MCF 10A (cell line): ENCODE measurements at regions of chr1 and their contacts with region 1.

Region 1: DNA sequence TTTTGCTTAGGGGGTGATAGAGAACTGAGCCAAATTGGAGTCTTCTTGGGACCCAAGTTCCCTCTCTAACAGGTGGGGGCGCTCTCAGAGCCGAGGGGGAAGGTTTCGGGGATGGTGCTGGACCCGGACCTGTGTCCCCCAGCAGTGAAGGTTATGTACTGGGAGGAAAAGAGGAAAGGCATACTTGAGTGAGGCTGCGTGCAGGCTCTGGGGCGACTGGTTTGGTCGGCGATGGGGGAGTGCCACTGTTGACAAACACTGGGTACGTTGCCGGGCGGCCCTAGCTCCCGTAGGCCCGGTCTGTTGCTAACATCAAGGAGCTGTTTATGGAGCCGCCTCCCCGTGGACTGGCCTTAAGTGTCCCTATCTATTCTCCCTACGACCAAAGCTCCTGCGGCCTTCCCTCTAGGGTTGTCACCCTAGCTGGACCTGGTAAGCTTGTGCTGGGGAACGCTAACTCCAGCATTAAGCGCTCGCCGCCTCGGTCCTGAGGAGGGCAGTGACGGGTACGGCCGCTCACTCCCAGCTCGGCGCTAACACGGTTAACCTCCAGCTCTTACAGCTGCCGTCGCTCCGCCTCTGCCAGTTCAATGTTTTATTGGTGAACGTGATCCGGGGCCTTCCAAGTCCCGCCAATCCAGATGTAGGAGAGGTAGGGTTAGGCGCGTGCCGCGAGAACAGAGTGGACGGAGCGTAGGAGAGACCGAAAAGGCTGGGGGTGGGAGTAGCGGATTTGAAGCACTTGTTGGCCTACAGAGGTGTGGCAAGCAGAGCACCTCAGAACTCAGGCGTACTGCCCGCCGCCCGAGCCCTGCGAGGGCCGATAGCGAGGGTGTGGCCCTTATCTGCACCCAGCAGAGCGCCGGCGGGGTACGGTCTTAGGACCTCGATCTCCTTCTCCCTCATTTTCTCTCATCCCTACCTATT is at the start of gene PPOX:
- DNase-seq: peak; percentile 100
- H3K4me3 Mint-ChIP-seq: peak within 1 kb of the TSS; percentile 98
- H3K27ac Mint-ChIP-seq: peak within 1 kb of the TSS; percentile 100
- H3K4me1 Mint-ChIP-seq: peaks cover 47% of the 10 kb centered on the region
- H3K27me3 Mint-ChIP-seq: no peaks in the 10 kb centered on the region
- CTCF ChIP-seq: peak; percentile 36
- total RNA-seq, gene PPOX: 30.3 and 32.4 TPM in 2 replicates

Region 2: DNA sequence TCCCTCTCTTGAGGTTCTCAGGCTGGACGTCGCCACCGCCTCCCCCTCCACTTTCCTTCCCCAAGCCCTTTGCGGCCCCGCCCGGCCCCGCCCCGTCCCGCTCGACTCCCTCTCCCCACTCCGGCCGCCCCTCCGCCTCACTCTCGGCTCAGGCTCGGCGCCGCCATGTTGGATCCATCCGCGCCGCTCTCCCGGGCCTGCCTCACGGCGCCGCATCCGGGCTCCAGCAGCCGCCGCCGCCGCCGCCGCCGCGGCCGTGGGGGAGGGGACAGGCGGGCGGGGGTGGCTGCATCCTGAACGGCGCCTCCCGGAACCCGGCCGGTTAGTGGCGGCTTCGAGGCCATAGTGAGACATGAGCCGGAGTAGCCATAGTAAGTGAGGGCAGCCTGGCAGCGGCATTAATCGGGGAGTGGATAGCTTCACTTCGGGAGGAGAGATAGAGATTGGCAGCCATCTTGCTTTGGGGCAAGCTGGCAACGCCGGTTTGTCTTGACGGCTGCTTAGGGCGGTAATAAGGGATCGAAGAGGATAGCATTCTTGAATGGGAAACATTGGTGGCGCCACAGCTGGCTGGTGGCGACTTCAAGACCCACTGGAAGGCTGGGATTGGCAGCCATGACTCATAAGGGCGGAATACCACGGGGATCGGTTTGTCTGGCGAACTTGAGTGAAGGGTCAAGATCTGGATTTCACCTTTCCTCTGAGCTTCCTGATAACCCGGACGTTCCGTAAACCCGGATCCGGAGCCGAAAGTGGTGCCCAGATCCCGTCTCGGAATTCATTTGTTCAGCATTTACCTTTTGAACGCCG is 33.4 kb before region 1 on chr1 and contains the start of gene DEDD:
- CTCF ChIA-PET with region 1: interaction called, 4 read pairs
- POLR2A ChIA-PET with region 1: interaction called, 70 read pairs
- intact Hi-C with region 1: no loop called
- DNase-seq: peak; percentile 99
- H3K4me3 Mint-ChIP-seq: no peak within 1 kb of the TSS
- H3K27ac Mint-ChIP-seq: no peak within 1 kb of the TSS
- H3K4me1 Mint-ChIP-seq: peaks cover 23% of the 10 kb centered on the region
- H3K27me3 Mint-ChIP-seq: no peaks in the 10 kb centered on the region
- CTCF ChIP-seq: no peak
- total RNA-seq, gene DEDD: 63.1 and 73.6 TPM in 2 replicates

Region 3: DNA sequence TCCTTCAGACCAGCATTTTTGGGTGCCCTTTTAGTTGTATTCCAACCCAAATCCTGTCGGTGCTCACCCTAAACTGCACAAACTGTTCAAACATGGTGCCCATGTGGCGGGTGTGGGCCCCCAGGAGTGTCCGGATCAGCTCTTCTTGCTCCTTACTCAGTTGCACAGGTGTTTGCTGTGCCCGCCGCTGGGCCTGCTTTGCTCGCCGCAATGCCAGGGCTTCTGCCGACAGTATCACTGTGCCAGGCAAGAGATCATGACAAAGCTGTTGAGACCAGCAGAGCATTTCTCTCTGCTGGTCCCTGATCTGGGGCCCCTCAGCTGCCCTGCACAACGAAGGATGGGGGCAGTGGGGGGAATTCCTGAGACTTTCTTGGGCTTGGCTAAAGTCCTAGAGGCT is 67.1 kb after region 1 on chr1:
- CTCF ChIA-PET with region 1: no interaction called
- POLR2A ChIA-PET with region 1: no interaction called
- intact Hi-C with region 1: no loop called
- DNase-seq: no peak
- H3K4me3 Mint-ChIP-seq: no peak overlapping the region
- H3K27ac Mint-ChIP-seq: no peak overlapping the region
- H3K4me1 Mint-ChIP-seq: peaks cover 2% of the 10 kb centered on the region
- H3K27me3 Mint-ChIP-seq: no peaks in the 10 kb centered on the region
- CTCF ChIP-seq: no peak

Region 4: DNA sequence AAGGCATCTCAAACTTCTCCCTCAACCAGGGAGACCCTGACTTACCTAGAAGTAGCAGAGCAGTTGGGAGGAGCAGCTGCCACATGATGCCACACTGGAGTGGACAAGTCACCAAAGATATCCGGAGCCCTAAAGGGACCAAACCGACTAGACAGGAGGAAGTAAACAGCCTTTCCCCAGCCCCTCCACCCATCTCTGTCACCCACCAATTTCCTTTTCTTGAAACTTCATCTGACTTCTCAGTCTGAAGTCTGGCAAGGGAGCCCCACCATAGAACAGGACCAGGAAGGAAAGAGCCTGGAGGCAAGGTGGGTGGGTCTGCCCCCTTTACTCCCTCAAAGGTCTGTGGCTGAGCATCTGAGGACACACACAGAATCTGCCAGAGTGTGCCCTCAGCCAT is 383.6 kb after region 1 on chr1 and contains the start of gene FCGR3A:
- CTCF ChIA-PET with region 1: no interaction called
- POLR2A ChIA-PET with region 1: no interaction called
- intact Hi-C with region 1: no loop called
- DNase-seq: no peak
- H3K4me3 Mint-ChIP-seq: no peak within 1 kb of the TSS
- H3K27ac Mint-ChIP-seq: no peak within 1 kb of the TSS
- H3K4me1 Mint-ChIP-seq: no peaks in the 10 kb centered on the region
- H3K27me3 Mint-ChIP-seq: no peaks in the 10 kb centered on the region
- CTCF ChIP-seq: no peak
- total RNA-seq, gene FCGR3A: not detected in 2 replicates